T-cell (primary cell): ENCODE measurements at regions of chr15 and their contacts with region 1.

Region 1: GRCh38 chr15:90886041-90886614 is 1.8 kb downstream of the FES start:
- DNase-seq: peak; percentile 29 to 84 (median 71)
- ATAC-seq: peak; percentile 52 to 68 (median 64)
- H3K4me3 ChIP-seq: no peak overlapping the region
- H3K4me3 Mint-ChIP-seq: no peak overlapping the region
- H3K27ac ChIP-seq: no peak overlapping the region
- H3K27ac Mint-ChIP-seq: peak overlapping the region in 1 of 2 donors; percentile 16
- H3K4me1 ChIP-seq: peaks cover 4 to 39% of the 10 kb centered on the region in 2 experiments
- H3K4me1 Mint-ChIP-seq: peaks cover 5 to 17% (median 16%) of the 10 kb centered on the region in 3 donors
- H3K27me3 ChIP-seq: peaks cover 0 to 48% of the 10 kb centered on the region in 2 experiments
- H3K27me3 Mint-ChIP-seq: peaks cover 4 to 7% of the 10 kb centered on the region in 2 donors

Region 2: GRCh38 chr15:90851114-90851513 is 35.0 kb before region 1 on chr15:
- CTCF ChIA-PET with region 1: interaction called in 1 of 2 experiments, 11 read pairs
- POLR2A ChIA-PET with region 1: no interaction called
- DNase-seq: peak in 18 of 35 experiments; percentile 22 to 61 (median 38)
- ATAC-seq: peak in 3 of 4 experiments; percentile 24 to 67 (median 53)
- H3K4me3 ChIP-seq: no peak overlapping the region
- H3K4me3 Mint-ChIP-seq: peak overlapping the region in 2 of 3 donors; percentile 28 to 53
- H3K27ac ChIP-seq: no peak overlapping the region
- H3K27ac Mint-ChIP-seq: peak overlapping the region; percentile 74 to 79
- H3K4me1 ChIP-seq: peaks cover 4 to 54% of the 10 kb centered on the region in 2 experiments
- H3K4me1 Mint-ChIP-seq: peaks cover 37 to 53% (median 50%) of the 10 kb centered on the region in 3 donors
- H3K27me3 ChIP-seq: peaks cover 0 to 6% of the 10 kb centered on the region in 2 experiments
- H3K27me3 Mint-ChIP-seq: no peaks in the 10 kb centered on the region

Region 3: GRCh38 chr15:90941038-90941437 is 54.9 kb after region 1 on chr15:
- CTCF ChIA-PET with region 1: no interaction called
- POLR2A ChIA-PET with region 1: no interaction called
- DNase-seq: no peak
- ATAC-seq: no peak
- H3K4me3 ChIP-seq: no peak overlapping the region
- H3K4me3 Mint-ChIP-seq: no peak overlapping the region
- H3K27ac ChIP-seq: no peak overlapping the region
- H3K27ac Mint-ChIP-seq: no peak overlapping the region
- H3K4me1 ChIP-seq: peaks cover 2 to 8% of the 10 kb centered on the region in 2 experiments
- H3K4me1 Mint-ChIP-seq: peaks cover 9 to 11% (median 9%) of the 10 kb centered on the region in 3 donors
- H3K27me3 ChIP-seq: no peaks in the 10 kb centered on the region
- H3K27me3 Mint-ChIP-seq: no peaks in the 10 kb centered on the region